ENCODE measurements at regions of chr4 and their contacts with region 1.

Region 1: GRCh38 chr4:110193822-110194761 is 4.3 kb downstream of the ELOVL6 start:
- DNase-seq: peak; percentile 92
- H3K4me3 Mint-ChIP-seq: peak overlapping the region; percentile 54
- H3K27ac Mint-ChIP-seq: peak overlapping the region; percentile 95
- H3K4me1 Mint-ChIP-seq: peaks cover 31% of the 10 kb centered on the region
- H3K27me3 Mint-ChIP-seq: no peaks in the 10 kb centered on the region

Region 2: GRCh38 chr4:109559983-109560686 is 634.0 kb before region 1 on chr4 and contains the start of gene MCUB:
- CTCF ChIA-PET with region 1: no interaction called
- intact Hi-C with region 1: loop called (anchors 1 kb)
- DNase-seq: peak; percentile 94
- H3K4me3 Mint-ChIP-seq: peak within 1 kb of the TSS; percentile 88
- H3K27ac Mint-ChIP-seq: peak within 1 kb of the TSS; percentile 95
- H3K4me1 Mint-ChIP-seq: peaks cover 54% of the 10 kb centered on the region
- H3K27me3 Mint-ChIP-seq: no peaks in the 10 kb centered on the region
- total RNA-seq, gene MCUB: 69.1 to 71.8 TPM

Region 3: GRCh38 chr4:109815151-109816081 is 378.7 kb before region 1 on chr4 and contains the start of gene GAR1:
- CTCF ChIA-PET with region 1: no interaction called
- intact Hi-C with region 1: loop called (anchors 1 kb)
- DNase-seq: peak; percentile 93
- H3K4me3 Mint-ChIP-seq: peak within 1 kb of the TSS; percentile 99
- H3K27ac Mint-ChIP-seq: peak within 1 kb of the TSS; percentile 95
- H3K4me1 Mint-ChIP-seq: peaks cover 47% of the 10 kb centered on the region
- H3K27me3 Mint-ChIP-seq: no peaks in the 10 kb centered on the region
- total RNA-seq, gene GAR1: 18.9 to 24.4 TPM

Region 4: GRCh38 chr4:110087070-110087708 is 106.9 kb before region 1 on chr4:
- CTCF ChIA-PET with region 1: no interaction called
- intact Hi-C with region 1: loop called (anchors 1 kb)
- DNase-seq: no peak
- H3K4me3 Mint-ChIP-seq: no peak overlapping the region
- H3K27ac Mint-ChIP-seq: peak overlapping the region; percentile 18
- H3K4me1 Mint-ChIP-seq: peaks cover 56% of the 10 kb centered on the region
- H3K27me3 Mint-ChIP-seq: no peaks in the 10 kb centered on the region

Region 5: GRCh38 chr4:110260299-110260698 is 66.2 kb after region 1 on chr4:
- CTCF ChIA-PET with region 1: no interaction called
- intact Hi-C with region 1: no loop called
- DNase-seq: no peak
- H3K4me3 Mint-ChIP-seq: no peak overlapping the region
- H3K27ac Mint-ChIP-seq: no peak overlapping the region
- H3K4me1 Mint-ChIP-seq: no peaks in the 10 kb centered on the region
- H3K27me3 Mint-ChIP-seq: no peaks in the 10 kb centered on the region

Region 6: DNA sequence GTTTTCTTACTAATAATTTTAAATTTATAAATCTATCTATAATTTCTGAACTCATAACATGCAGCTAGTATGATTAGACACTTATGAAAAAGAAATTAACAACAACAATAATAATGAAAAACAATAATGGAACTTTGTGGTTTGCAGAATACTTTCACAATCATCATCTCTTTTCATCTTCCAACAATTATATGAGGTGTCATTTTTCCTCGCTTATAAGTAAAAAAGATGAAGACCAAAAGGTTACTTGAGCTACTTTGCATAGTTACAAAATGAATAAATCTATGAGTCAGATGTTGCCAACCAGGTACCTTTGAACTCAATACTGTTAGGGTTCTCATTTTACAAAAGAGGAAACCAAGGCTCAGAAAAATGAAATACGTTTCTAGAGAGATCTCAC is 102.8 kb after region 1 on chr4:
- CTCF ChIA-PET with region 1: interaction called, 4 read pairs
- intact Hi-C with region 1: loop called (anchors 1 kb)
- DNase-seq: no peak
- H3K4me3 Mint-ChIP-seq: no peak overlapping the region
- H3K27ac Mint-ChIP-seq: no peak overlapping the region
- H3K4me1 Mint-ChIP-seq: peaks cover 13% of the 10 kb centered on the region
- H3K27me3 Mint-ChIP-seq: peaks cover 56% of the 10 kb centered on the region

Region 7: GRCh38 chr4:110484740-110485139 is 290.6 kb after region 1 on chr4:
- CTCF ChIA-PET with region 1: no interaction called
- intact Hi-C with region 1: no loop called
- DNase-seq: no peak
- H3K4me3 Mint-ChIP-seq: no peak overlapping the region
- H3K27ac Mint-ChIP-seq: no peak overlapping the region
- H3K4me1 Mint-ChIP-seq: no peaks in the 10 kb centered on the region
- H3K27me3 Mint-ChIP-seq: peaks cover 26% of the 10 kb centered on the region

Region 8: DNA sequence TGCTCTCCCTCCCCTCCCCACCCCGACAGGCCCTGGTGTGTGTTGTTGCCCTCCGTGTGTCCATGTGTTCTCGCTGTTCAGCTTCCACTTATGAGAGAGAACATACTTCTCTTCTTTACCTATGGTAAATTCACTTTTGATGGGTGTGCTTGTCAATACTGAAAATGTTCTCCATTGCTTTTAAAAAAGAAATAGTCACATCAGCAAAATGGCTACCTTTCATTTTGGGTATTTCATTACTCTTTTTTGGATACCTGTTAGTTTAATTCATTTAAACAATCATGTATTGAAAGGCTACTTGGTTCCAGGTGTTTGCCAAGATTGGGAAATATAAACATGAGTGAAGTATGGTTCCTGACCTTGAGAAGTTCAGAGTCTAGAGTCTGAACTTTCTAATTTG is 536.2 kb after region 1 on chr4:
- CTCF ChIA-PET with region 1: no interaction called
- intact Hi-C with region 1: no loop called
- DNase-seq: no peak
- H3K4me3 Mint-ChIP-seq: no peak overlapping the region
- H3K27ac Mint-ChIP-seq: no peak overlapping the region
- H3K4me1 Mint-ChIP-seq: no peaks in the 10 kb centered on the region
- H3K27me3 Mint-ChIP-seq: no peaks in the 10 kb centered on the region